Heart right ventricle (tissue), 16 donors: ENCODE measurements at regions of chr2 and their contacts with region 1.

Region 1: DNA sequence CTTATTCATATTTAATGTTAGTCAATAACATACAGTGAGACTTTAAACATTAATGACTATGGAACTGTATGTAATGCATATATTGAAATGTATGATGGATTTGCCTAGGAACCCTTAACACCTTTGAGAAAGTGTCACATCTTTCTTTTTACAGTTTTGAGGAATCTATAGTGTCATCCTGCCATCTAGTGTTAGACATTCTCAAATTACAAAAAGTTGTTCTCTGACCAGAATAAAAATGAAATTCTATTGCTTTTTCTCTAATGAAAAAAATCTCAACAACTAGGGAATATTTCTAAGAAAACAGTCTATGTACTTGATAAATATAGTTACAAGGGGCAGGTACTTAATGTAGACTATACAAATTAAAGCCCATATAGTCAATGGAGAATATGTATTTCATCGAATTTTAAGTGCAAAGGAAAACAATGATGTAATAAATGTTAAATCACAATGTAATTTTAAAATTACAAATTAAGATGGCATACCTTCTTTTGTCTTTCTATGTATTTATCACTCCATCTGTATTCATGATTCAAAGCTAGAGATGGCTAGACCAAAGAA is 5.1 kb upstream of the CALCRL start:
- DNase-seq: no peak
- ATAC-seq: no peak
- H3K4me3 ChIP-seq: no peak overlapping the region
- H3K27ac ChIP-seq: no peak overlapping the region
- H3K4me1 ChIP-seq: no peaks in the 10 kb centered on the region
- H3K27me3 ChIP-seq: no peaks in the 10 kb centered on the region
- CTCF ChIP-seq: peak in 8 of 9 donors; percentile 30 to 75 (median 56)

Region 2: GRCh38 chr2:186903216-186903615 is 549.9 kb before region 1 on chr2:
- intact Hi-C with region 1: loop called in 3 of 10 experiments (anchors 2 to 10 kb)
- DNase-seq: no peak
- ATAC-seq: no peak
- H3K4me3 ChIP-seq: no peak overlapping the region
- H3K27ac ChIP-seq: no peak overlapping the region
- H3K4me1 ChIP-seq: peaks cover 0 to 1% (median 0%) of the 10 kb centered on the region in 9 donors
- H3K27me3 ChIP-seq: no peaks in the 10 kb centered on the region
- CTCF ChIP-seq: peak in 6 of 9 donors; percentile 45 to 65 (median 48)

Region 3: GRCh38 chr2:187138265-187138664 is 314.9 kb before region 1 on chr2:
- intact Hi-C with region 1: loop called in 7 of 10 experiments (anchors 2 to 10 kb)
- DNase-seq: peak; percentile 33 to 49
- ATAC-seq: peak in 6 of 8 donors; percentile 51 to 77 (median 62)
- H3K4me3 ChIP-seq: no peak overlapping the region
- H3K27ac ChIP-seq: peak overlapping the region in 2 of 10 donors; percentile 3 to 5
- H3K4me1 ChIP-seq: peaks cover 0 to 11% (median 0%) of the 10 kb centered on the region in 9 donors
- H3K27me3 ChIP-seq: no peaks in the 10 kb centered on the region
- CTCF ChIP-seq: peak in 8 of 9 donors; percentile 6 to 62 (median 47)

Region 4: GRCh38 chr2:187299122-187299906 is 153.8 kb before region 1 on chr2:
- intact Hi-C with region 1: loop called in 6 of 10 experiments (anchors 2 to 10 kb)
- DNase-seq: no peak
- ATAC-seq: no peak
- H3K4me3 ChIP-seq: no peak overlapping the region
- H3K27ac ChIP-seq: peak overlapping the region in 2 of 10 donors; percentile 13 to 33
- H3K4me1 ChIP-seq: peaks cover 0 to 35% (median 6%) of the 10 kb centered on the region in 9 donors
- H3K27me3 ChIP-seq: no peaks in the 10 kb centered on the region
- CTCF ChIP-seq: peak in 7 of 9 donors; percentile 32 to 65 (median 44)